PC-9 (cell line): ENCODE measurements at regions of chr12 and their contacts with region 1.

Region 1: GRCh38 chr12:87687362-87687761 is 341.8 kb downstream of the C12orf50 start:
- DNase-seq: peak in 1 of 2 experiments; percentile 3
- H3K4me3 ChIP-seq: no peak overlapping the region
- H3K27ac ChIP-seq: no peak overlapping the region
- H3K4me1 ChIP-seq: no peaks in the 10 kb centered on the region
- H3K27me3 ChIP-seq: no peaks in the 10 kb centered on the region
- CTCF ChIP-seq: no peak

Region 2: DNA sequence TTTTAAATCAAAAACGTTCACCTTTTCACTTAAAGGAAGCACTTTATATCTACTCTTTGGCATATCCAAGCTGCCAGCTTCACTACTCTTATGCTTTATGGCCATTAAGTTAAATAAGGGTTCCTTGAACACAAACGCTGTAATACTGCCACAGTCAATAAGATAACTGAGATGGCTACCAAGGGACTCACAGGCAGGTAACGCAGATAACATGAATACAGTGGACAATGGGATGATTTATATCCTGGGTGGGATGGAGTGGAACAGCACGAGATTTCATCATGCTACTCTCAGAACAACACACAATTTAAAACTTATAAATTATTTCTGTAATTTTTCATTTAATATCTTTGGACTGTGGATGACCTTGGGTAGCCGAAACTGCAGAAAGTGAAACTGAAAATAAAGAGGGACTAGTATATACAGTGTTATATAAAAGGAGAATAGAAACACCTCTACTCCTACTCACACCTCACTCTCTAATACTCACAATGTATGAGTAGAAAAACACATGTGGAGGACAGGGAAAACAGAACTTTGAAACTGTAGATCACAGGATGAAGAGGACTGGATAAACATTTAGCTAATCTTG is 25.5 kb before region 1 on chr12:
- CTCF ChIA-PET with region 1: interaction called, 24 read pairs
- POLR2A ChIA-PET with region 1: no interaction called
- intact Hi-C with region 1: no loop called
- DNase-seq: peak in 1 of 2 experiments; percentile 2
- H3K4me3 ChIP-seq: peak overlapping the region; percentile 55
- H3K27ac ChIP-seq: no peak overlapping the region
- H3K4me1 ChIP-seq: no peaks in the 10 kb centered on the region
- H3K27me3 ChIP-seq: no peaks in the 10 kb centered on the region
- CTCF ChIP-seq: no peak

Region 3: DNA sequence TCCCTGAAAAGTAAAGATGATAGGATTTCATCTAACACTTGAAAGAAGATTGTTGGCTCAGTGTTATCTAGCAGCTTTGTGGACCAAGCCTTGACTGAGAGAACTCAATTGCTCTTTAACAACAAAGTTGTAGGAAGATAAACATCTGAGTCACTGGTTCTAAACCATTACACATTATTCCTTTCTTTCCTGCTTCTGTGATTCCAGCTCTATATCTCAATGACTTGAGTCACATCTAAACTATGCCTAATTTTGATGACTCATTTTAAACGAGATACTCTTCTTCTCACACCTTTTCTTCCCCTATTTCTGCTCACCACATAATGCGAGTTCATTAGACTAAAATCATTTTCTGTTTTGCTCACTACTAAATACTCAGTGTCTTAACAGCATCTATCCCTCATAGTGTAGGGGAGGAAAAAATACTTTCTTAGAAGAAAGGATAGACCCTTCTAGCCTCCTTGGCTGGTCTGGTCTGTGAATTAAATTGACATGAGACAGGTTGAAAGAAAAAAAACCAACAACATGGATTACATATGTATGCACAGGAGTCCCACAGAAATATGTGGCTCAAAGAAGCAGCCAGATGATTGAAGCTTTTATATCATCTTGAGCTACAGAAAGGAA is 140.4 kb after region 1 on chr12:
- CTCF ChIA-PET with region 1: no interaction called
- POLR2A ChIA-PET with region 1: no interaction called
- intact Hi-C with region 1: loop called (anchors 10 kb)
- DNase-seq: peak; percentile 1 to 73
- H3K4me3 ChIP-seq: no peak overlapping the region
- H3K27ac ChIP-seq: peak overlapping the region; percentile 55
- H3K4me1 ChIP-seq: peaks cover 13% of the 10 kb centered on the region
- H3K27me3 ChIP-seq: no peaks in the 10 kb centered on the region
- CTCF ChIP-seq: no peak